ENCODE measurements at regions of chr1 and their contacts with region 1.

Region 1: GRCh38 chr1:22105611-22106207 is 37.2 kb downstream of the WNT4 start:
- DNase-seq: peak; percentile 41
- H3K4me3 ChIP-seq: no peak overlapping the region
- H3K27ac ChIP-seq: no peak overlapping the region
- H3K27me3 ChIP-seq: no peaks in the 10 kb centered on the region
- CTCF ChIP-seq: peak; percentile 88

Region 2: GRCh38 chr1:22052115-22053016 is 53.3 kb before region 1 on chr1 and contains the start of gene CDC42:
- CTCF ChIA-PET with region 1: interaction called, 4 read pairs
- POLR2A ChIA-PET with region 1: interaction called, 18 read pairs
- DNase-seq: peak; percentile 89
- H3K4me3 ChIP-seq: peak within 1 kb of the TSS; percentile 95
- H3K27ac ChIP-seq: peak within 1 kb of the TSS; percentile 85
- H3K27me3 ChIP-seq: no peaks in the 10 kb centered on the region
- CTCF ChIP-seq: no peak
- polyA plus RNA-seq, gene CDC42: 345 and 400 TPM in 2 replicates

Region 3: DNA sequence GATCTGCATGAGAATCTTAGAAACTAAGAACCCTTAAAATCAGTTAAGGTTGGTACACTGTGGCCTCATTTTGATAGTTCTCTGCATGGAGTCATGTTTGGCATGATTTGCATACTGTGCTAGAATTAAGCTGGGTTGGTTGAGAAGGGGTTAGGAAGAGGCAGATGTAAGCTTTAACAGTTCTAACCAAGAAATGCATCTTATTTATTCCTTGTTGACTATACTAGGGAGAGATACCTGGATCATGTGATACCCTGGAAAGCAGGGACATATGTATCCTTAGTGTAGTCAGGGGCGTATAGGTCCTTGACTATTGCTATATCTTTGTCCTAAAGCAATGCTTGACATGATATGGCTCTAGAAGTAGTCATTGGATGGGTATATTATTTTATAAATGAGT is 12.2 kb before region 1 on chr1:
- CTCF ChIA-PET with region 1: interaction called, 13 read pairs
- POLR2A ChIA-PET with region 1: no interaction called
- DNase-seq: no peak
- H3K4me3 ChIP-seq: no peak overlapping the region
- H3K27ac ChIP-seq: no peak overlapping the region
- H3K27me3 ChIP-seq: no peaks in the 10 kb centered on the region
- CTCF ChIP-seq: no peak

Region 4: DNA sequence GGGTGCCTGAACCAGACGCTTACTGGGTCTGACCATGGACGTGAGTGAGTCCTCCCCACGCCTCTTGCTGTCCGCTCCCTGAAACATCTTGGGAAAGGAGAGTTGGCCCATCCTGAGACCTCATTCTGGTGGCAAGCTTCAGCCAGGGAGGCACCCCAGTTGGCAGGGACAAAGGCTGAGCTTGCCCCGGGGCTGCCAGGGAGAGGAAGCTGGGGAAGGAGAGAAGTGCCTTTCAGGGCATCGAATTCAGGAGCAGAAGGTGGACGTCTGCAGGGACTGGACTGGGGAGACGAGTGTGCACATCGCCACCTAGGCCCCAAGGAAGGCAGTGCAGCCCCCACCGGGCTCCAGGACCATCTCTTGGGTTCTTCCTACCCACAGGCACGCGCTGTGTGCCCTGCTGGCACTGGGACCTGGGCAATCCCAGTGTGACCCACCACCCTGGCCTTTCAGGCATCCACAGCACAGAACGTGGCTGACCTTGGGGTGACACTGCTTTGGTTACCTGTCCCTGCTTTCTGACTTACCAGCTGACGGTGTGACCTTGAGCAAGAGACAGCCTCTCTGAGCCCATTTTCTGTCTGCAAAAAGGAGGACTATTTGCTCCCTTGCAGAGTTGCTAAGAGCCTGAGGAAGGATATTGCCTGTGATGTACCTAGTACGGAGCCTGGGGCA is 170.1 kb after region 1 on chr1:
- CTCF ChIA-PET with region 1: interaction called, 20 read pairs
- POLR2A ChIA-PET with region 1: no interaction called
- DNase-seq: peak; percentile 10
- H3K4me3 ChIP-seq: no peak overlapping the region
- H3K27ac ChIP-seq: no peak overlapping the region
- H3K27me3 ChIP-seq: peaks cover 51% of the 10 kb centered on the region
- CTCF ChIP-seq: peak; percentile 88

Measured in AG04450 (cell line).